ENCODE measurements at regions of chr17 and their contacts with region 1.

Region 1: DNA sequence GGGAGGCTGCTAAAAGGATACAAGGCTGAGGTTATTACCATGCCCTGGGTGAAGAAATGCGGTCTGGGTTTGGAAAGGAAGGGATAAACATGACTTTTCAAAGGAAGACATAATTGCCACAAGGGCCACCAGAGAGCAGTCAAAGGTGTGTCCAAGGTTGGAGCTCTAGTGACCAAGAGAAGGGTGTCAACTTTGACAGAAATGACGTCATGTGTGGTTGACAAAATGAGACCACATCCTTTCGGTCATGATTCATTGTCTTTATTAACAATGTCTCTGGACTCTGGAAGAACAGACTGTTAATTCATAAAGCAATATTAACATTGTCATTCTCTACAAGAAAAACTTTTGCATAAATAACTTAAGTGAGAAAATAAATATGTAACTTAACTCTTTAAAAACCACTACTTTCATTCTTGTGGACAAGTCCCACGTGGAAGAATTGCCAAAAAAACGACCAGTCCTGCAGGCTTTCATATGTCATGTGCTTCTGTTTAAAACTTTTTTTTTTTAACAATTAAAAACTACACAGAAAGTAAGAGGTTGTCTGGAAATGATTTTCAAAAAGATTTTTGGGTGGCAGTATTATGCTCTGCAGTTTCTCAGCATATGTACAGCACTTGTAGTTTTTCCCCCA is 5.0 kb downstream of the SOST start:
- DNase-seq: peak; percentile 20
- ATAC-seq: no peak
- H3K4me3 ChIP-seq: no peak overlapping the region
- H3K27ac ChIP-seq: no peak overlapping the region
- H3K4me1 ChIP-seq: peaks cover 4% of the 10 kb centered on the region
- H3K27me3 ChIP-seq: peaks cover 50% of the 10 kb centered on the region
- CTCF ChIP-seq: no peak
- POLR2A ChIP-seq: no peak
- RAD21 ChIP-seq: no peak

Region 2: DNA sequence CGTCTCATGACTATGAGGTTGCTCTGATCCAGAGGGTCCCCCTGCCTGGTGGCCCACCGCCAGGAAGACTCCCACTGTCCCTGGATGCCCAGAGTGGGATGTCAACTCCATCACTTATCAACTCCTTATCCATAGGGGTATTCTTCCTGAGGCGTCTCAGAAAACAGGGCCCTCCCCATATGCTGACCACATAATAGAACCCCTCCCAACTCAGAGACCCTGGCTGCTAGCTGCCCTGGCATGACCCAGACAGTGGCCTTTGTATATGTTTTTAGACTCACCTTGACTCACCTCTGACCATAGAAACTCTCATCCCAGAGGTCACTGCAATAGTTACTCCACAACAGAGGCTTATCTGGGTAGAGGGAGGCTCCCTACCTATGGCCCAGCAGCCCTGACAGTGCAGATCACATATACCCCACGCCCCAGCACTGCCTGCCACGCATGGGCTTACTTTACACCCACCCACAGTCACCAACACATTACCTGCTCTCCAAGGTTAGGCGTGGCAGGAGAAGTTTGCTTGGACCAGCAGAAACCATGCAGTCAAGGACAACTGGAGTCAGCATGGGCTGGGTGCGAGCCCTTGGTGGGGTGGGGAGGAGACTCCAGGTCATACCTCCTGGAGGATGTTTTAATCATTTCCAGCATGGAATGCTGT is 855.3 kb before region 1 on chr17:
- CTCF ChIA-PET with region 1: no interaction called
- POLR2A ChIA-PET with region 1: no interaction called
- dilution Hi-C with region 1: no loop called
- in situ Hi-C with region 1: no loop called
- intact Hi-C with region 1: no loop called
- DNase-seq: no peak
- ATAC-seq: no peak
- H3K4me3 ChIP-seq: no peak overlapping the region
- H3K27ac ChIP-seq: no peak overlapping the region
- H3K4me1 ChIP-seq: no peaks in the 10 kb centered on the region
- H3K27me3 ChIP-seq: peaks cover 26% of the 10 kb centered on the region
- CTCF ChIP-seq: no peak
- POLR2A ChIP-seq: no peak
- RAD21 ChIP-seq: no peak

Region 3: DNA sequence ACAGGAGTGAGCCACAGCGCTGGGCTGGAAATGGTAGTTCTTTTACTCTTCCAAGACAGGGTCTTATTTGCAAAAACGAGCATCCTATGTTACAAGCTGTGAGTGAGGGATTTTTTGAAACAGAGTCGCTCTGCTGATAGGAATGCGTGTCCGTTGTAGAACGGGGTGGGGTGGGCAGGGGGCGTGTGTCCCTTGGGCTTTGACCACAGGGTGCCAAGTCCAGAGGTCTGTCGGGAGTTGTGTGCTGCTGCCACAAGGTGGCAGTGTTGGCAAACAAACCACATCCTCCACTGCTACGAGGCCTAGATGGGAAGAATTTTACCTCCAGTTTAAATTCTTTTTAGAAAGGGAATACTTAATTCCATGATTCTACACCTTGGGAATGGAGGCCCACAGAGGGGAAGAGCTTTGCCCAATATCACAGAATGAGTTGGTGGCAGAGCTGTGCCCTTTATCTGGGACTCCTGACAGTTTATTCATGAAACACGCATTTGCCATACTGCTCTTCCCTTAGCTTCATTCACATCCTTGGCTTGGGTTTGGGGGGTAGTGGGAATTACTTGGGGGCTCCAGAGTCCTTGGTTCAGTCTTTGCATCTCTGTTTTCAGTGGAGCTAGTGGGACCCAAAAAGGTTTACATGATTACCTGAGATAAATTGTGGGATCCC is 176.9 kb before region 1 on chr17:
- CTCF ChIA-PET with region 1: no interaction called
- POLR2A ChIA-PET with region 1: no interaction called
- dilution Hi-C with region 1: no loop called
- in situ Hi-C with region 1: loop called (anchors 5 kb)
- intact Hi-C with region 1: no loop called
- DNase-seq: peak; percentile 77
- ATAC-seq: peak; percentile 71
- H3K4me3 ChIP-seq: no peak overlapping the region
- H3K27ac ChIP-seq: no peak overlapping the region
- H3K4me1 ChIP-seq: peaks cover 14% of the 10 kb centered on the region
- H3K27me3 ChIP-seq: no peaks in the 10 kb centered on the region
- CTCF ChIP-seq: peak; percentile 93
- POLR2A ChIP-seq: peak; percentile 56; the same call in 1 of the 2 replicates
- RAD21 ChIP-seq: peak; percentile 99

Region 4: DNA sequence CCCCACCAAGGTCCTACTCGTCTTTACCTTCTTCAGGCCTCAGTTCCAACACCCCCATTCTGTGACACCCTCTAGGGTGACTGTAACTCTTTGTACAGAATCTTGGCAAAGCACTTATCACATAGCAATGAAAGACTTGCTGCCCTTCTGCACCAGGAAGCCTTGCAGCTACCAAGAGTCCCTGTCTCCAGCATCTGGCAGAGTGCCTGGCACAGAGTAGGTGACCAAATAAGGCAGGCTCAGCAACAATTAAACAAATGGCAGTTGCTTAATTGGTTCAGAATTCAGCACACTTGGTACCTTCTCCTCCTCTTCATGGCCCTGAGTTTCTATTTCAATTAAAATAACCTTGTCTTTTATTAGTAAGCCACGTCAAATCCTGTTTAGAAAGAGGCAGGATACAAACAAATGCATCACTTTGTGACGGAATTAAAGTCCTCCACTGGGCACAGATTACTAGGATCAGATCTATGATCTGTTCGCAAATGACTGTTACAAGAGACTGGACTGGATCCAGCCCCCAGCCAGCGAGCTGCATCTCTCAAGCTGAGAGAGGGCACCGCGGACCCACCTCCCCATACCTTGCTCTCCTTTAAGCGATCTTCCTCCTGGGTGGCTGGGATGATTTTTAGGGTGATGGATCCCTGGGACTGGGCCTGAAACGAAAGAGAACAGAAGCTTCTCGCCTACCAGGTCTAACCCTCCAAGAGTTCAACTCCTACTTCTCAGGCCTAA is 69.9 kb after region 1 on chr17:
- CTCF ChIA-PET with region 1: no interaction called
- POLR2A ChIA-PET with region 1: no interaction called
- dilution Hi-C with region 1: no loop called
- in situ Hi-C with region 1: no loop called
- intact Hi-C with region 1: no loop called
- DNase-seq: no peak
- ATAC-seq: peak; percentile 32
- H3K4me3 ChIP-seq: no peak overlapping the region
- H3K27ac ChIP-seq: no peak overlapping the region
- H3K4me1 ChIP-seq: peaks cover 6% of the 10 kb centered on the region
- H3K27me3 ChIP-seq: no peaks in the 10 kb centered on the region
- CTCF ChIP-seq: no peak
- POLR2A ChIP-seq: no peak
- RAD21 ChIP-seq: no peak

Measured in IMR-90 (cell line).